Activated naive CD4-positive, alpha-beta T cell treated with anti-CD3 and anti-CD28 coated beads for 36 hours (primary cell): ENCODE measurements at regions of chr12 and their contacts with region 1.

Region 1: GRCh38 chr12:3752741-3753486 is at the start of gene CRACR2A:
- DNase-seq: peak; percentile 86
- H3K4me3 Mint-ChIP-seq: peak within 1 kb of the TSS; percentile 95
- H3K27ac Mint-ChIP-seq: peak within 1 kb of the TSS; percentile 98
- H3K4me1 Mint-ChIP-seq: peaks cover 53% of the 10 kb centered on the region
- H3K27me3 Mint-ChIP-seq: no peaks in the 10 kb centered on the region
- total RNA-seq, gene CRACR2A: 19.0 to 20.7 TPM

Region 2: GRCh38 chr12:2804393-2805142 is 948.3 kb before region 1 on chr12:
- CTCF ChIA-PET with region 1: no interaction called
- intact Hi-C with region 1: no loop called
- DNase-seq: no peak
- H3K4me3 Mint-ChIP-seq: no peak overlapping the region
- H3K27ac Mint-ChIP-seq: peak overlapping the region; percentile 9
- H3K4me1 Mint-ChIP-seq: peaks cover 8% of the 10 kb centered on the region
- H3K27me3 Mint-ChIP-seq: no peaks in the 10 kb centered on the region

Region 3: GRCh38 chr12:3658327-3659163 is 94.4 kb before region 1 on chr12:
- CTCF ChIA-PET with region 1: no interaction called
- intact Hi-C with region 1: loop called (anchors 2 kb)
- DNase-seq: peak; percentile 52
- H3K4me3 Mint-ChIP-seq: no peak overlapping the region
- H3K27ac Mint-ChIP-seq: no peak overlapping the region
- H3K4me1 Mint-ChIP-seq: no peaks in the 10 kb centered on the region
- H3K27me3 Mint-ChIP-seq: no peaks in the 10 kb centered on the region

Region 4: DNA sequence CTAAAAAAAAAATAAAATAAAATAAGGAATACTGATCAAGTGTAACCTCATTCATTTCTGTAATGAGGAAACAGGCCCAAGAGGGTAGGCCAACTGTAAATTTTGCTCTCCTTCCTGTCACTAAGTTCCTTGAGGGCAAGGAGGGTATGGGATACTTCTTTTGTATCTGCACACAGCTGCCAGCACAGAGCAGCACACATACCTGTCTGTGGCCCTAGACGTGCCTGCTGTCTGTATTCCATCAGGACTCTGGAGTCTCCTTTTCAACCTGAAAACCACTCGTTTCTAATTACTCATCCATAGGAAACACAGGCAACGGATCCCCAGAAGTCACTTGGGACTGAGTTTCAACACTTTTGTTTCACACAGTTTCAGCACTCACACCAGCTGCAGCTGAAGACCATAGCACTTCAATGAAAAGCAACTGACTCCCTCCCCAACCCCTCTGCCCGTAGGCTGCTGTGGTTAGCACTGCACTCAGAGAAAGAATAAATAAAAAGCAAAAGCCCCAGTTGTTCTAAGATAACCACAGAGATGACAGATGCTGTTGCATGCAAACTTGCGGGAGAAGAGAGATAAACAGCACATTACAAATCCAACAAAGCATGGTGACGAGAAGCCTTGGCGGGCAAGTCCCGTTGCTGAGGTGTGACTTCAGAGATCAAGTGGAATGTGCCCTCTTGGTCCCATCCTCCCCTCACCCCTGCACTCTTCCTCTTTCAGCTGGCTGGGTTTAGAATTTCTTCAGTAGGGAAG is 24.9 kb before region 1 on chr12:
- CTCF ChIA-PET with region 1: interaction called, 8 read pairs
- intact Hi-C with region 1: loop called (anchors 1 kb)
- DNase-seq: peak; percentile 77
- H3K4me3 Mint-ChIP-seq: peak overlapping the region; percentile 38
- H3K27ac Mint-ChIP-seq: peak overlapping the region; percentile 84
- H3K4me1 Mint-ChIP-seq: peaks cover 37% of the 10 kb centered on the region
- H3K27me3 Mint-ChIP-seq: no peaks in the 10 kb centered on the region

Region 5: GRCh38 chr12:3770886-3771285 is 18.0 kb after region 1 on chr12:
- CTCF ChIA-PET with region 1: interaction called, 4 read pairs
- intact Hi-C with region 1: loop called (anchors 2 kb)
- DNase-seq: no peak
- H3K4me3 Mint-ChIP-seq: no peak overlapping the region
- H3K27ac Mint-ChIP-seq: no peak overlapping the region
- H3K4me1 Mint-ChIP-seq: peaks cover 8% of the 10 kb centered on the region
- H3K27me3 Mint-ChIP-seq: no peaks in the 10 kb centered on the region